Esophagus muscularis mucosa (tissue), 4 donors: ENCODE measurements at regions of chr4 and their contacts with region 1.

Region 1: DNA sequence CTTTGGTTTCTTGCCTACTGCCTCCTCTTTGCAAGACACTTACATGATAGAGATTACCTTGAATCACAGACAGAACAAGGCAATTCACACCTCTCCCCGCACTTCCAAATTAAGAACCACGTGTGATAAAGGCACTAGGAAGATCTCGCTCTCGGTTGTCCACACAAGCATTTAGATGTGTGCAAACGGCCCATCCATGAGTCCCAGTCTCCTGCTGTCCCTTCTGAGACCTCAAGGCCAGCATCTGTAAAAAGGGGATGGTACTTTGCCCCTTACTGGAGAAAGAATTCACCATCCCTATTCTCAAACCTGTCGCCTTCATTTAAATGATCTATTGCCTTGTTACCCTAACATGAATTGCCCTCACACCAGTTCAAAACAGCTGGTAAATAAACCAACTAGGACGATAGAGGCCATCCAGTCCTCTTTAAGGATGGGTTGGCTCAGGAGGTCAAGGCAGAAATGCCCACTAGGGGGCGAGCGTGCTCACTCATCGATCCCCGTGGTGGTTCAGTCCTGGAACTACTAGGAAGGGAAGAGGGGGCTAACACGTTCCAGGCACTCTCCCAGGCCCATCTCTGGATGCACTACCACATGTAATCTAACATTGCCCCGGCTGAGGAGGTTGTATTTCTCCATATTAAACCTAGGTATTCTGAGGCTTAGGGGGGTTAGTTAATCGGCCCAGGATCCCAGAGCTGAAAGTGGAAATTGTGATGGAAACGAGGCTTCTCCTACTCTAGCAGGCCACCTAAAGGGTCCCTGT is 95.8 kb downstream of the DHX15 start:
- DNase-seq: no peak
- H3K4me3 ChIP-seq: no peak overlapping the region
- H3K27ac ChIP-seq: no peak overlapping the region
- H3K4me1 ChIP-seq: peaks cover 0 to 10% (median 3%) of the 10 kb centered on the region in 4 donors
- H3K27me3 ChIP-seq: no peaks in the 10 kb centered on the region
- CTCF ChIP-seq: peak; percentile 66 to 89 (median 84)
- EP300 ChIP-seq: no peak
- POLR2A ChIP-seq: no peak

Region 2: GRCh38 chr4:24453951-24454350 is 34.6 kb before region 1 on chr4:
- intact Hi-C with region 1: no loop called
- DNase-seq: no peak
- H3K4me3 ChIP-seq: no peak overlapping the region
- H3K27ac ChIP-seq: no peak overlapping the region
- H3K4me1 ChIP-seq: no peaks in the 10 kb centered on the region
- H3K27me3 ChIP-seq: no peaks in the 10 kb centered on the region
- CTCF ChIP-seq: no peak
- EP300 ChIP-seq: no peak
- POLR2A ChIP-seq: no peak

Region 3: DNA sequence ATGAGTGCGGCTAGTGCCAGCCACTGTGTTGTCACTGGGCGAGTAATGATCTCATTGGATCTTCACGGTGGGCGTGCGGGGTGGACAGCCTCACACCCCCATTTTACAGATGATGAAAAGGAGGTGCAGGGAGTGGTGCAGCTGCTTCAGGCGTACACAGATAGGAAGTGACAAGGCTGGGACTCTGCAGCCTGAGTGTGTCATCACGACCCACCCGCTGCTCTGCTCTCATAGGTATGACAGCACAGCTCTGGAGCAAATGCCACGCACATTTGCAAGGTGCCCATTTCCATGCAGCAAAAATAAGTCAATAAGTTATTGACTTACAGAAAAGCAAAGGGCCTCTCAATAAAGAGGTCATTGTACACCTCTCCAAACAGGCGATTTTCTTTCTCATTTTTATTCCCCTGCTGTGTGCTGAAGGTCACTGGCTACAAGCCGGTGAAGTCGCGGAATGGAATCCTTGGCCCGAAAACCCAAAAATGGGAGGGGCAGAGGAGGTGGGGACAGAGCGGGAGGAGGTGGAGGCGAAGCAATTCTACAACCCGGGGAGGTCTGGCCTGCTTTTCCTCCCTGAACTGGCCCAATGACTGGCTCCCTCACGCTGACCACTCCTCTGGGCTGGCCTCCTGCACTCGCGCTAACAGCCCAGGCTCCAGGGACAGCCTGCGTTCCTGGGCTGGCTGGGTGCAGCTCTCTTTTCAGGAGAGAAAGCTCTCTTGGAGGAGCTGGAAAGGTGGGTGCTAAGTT is 306.5 kb after region 1 on chr4 and contains the start of gene SOD3:
- intact Hi-C with region 1: no loop called
- DNase-seq: peak; percentile 97
- H3K4me3 ChIP-seq: peak within 1 kb of the TSS; percentile 55 to 73 (median 58)
- H3K27ac ChIP-seq: peak within 1 kb of the TSS; percentile 90 to 96 (median 92)
- H3K4me1 ChIP-seq: peaks cover 30 to 73% (median 66%) of the 10 kb centered on the region in 4 donors
- H3K27me3 ChIP-seq: peaks cover 0 to 5% (median 0%) of the 10 kb centered on the region in 4 donors
- CTCF ChIP-seq: no peak
- EP300 ChIP-seq: peak; percentile 23
- POLR2A ChIP-seq: peak; percentile 84
- total RNA-seq, gene SOD3: 404 to 1,012 (median 570) TPM

Region 4: DNA sequence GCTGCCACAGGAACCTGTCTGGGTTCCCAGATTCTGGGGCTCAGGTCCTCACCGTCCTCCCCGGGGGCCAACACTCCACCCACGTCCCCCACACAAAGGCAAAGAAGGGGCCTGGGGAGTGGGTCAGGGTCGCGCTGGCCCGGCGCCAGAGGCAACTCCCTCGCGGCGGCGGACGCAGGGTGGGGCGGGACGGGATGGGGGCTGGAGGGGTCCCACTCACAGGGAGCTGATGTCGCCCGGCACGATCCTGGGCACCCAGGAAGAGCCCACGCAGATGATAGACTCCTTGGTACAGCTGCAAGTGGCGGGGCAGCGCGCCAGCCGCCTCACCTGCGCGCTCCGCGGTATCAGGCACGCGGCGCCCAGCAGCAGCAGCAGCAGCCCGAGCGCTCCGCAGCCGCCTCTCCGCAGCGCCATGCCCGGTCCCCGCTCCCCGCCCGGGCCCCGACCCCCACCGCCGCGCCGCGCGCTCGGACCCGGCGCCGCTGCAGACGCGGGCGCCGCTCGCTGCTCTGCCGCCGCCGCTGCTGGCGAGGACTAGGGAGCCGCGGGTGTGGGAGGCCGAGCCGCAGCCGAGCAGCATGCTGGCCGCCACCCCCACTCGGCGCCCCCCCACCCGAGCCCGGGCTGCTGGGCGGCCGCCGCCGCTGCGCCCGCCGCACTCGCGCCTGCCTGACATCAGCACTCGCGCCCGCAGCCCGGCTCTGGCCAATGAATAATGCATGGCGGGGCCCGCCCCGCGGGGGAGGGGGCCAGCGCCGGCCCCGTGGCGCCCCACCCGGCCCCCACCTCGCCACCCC is 541.9 kb after region 1 on chr4 and contains the start of gene LGI2:
- intact Hi-C with region 1: loop called (anchors 10 kb)
- DNase-seq: no peak
- H3K4me3 ChIP-seq: peak within 1 kb of the TSS; percentile 68 to 74 (median 70)
- H3K27ac ChIP-seq: peak within 1 kb of the TSS; percentile 82 to 86 (median 84)
- H3K4me1 ChIP-seq: peaks cover 13 to 44% (median 33%) of the 10 kb centered on the region in 4 donors
- H3K27me3 ChIP-seq: no peaks in the 10 kb centered on the region
- CTCF ChIP-seq: no peak
- EP300 ChIP-seq: no peak
- POLR2A ChIP-seq: no peak
- total RNA-seq, gene LGI2: 4.6 to 13.7 (median 9.7) TPM

Region 5: DNA sequence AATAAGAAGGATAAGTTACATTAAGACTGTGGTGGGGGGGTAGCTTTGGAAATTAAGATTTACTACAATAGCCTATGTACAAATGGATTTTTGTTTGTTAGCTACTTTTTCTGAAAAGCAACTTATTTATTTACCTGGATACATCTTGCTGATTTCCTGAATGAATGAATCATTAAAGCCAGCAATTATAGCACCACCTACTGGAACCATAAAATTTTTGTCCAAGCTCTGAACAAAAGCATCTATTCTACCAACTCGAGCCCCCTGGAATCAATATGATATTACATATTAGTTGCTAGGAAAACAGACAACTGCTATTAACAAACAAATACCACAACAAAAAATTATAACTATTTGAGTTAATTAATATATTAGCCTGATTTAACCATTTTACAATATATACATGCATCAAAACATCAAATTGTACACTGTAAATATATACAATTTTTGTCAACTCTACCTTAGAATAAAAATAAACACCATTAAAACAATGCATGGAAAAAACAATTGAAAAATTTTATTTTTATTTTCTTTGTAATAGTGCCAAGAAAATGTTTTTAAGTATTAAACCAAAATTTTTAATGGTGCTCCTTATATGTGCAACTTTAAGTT is 656.4 kb after region 1 on chr4:
- intact Hi-C with region 1: loop called (anchors 10 kb)
- DNase-seq: no peak
- H3K4me3 ChIP-seq: no peak overlapping the region
- H3K27ac ChIP-seq: no peak overlapping the region
- H3K4me1 ChIP-seq: no peaks in the 10 kb centered on the region
- H3K27me3 ChIP-seq: no peaks in the 10 kb centered on the region
- CTCF ChIP-seq: peak; percentile 45 to 61 (median 46)
- EP300 ChIP-seq: no peak
- POLR2A ChIP-seq: no peak